HEK293T (cell line): ENCODE measurements at regions of chr2 and their contacts with region 1.

Region 1: DNA sequence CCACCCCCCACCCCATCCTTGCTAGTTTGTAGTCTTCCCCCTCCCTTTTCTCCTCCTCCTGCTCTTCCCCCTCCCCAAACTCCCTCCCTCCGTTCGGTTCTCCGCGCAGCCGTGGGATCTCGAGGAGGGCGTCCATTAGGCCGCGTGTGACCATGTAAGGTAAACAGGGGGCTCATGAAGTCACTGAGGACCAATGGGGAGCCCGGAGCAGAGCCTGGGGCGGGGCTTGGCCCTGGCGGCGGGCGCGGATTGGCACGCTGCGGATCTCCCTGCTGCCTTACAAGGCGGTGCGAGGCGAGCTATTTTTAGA is 246 bp upstream of the KLF7 start:
- DNase-seq: peak; percentile 95

Region 2: DNA sequence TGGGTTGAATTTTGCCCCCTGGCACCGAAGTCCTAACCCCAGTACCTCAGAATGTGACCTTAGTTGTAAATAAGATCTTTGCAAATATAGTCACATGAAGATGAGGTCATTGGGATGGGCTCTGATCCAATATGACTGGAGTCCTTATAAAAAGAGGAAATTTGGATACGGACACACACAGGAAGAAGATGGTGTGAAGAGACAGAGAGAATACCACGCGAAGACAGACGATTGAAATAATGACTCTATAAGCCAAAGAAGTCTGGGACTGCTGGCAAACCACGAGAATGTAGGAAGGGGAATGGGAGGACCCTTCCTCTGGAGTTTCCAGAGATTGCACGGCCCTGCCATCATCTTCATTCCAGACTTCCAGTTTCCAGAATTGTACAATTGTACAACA is 128.1 kb before region 1 on chr2:
- CTCF ChIA-PET with region 1: no interaction called
- POLR2A ChIA-PET with region 1: no interaction called
- DNase-seq: no peak

Region 3: GRCh38 chr2:207133820-207134519 is 32.0 kb before region 1 on chr2:
- CTCF ChIA-PET with region 1: no interaction called
- POLR2A ChIA-PET with region 1: interaction called, 18 read pairs
- DNase-seq: peak; percentile 37

Region 4: DNA sequence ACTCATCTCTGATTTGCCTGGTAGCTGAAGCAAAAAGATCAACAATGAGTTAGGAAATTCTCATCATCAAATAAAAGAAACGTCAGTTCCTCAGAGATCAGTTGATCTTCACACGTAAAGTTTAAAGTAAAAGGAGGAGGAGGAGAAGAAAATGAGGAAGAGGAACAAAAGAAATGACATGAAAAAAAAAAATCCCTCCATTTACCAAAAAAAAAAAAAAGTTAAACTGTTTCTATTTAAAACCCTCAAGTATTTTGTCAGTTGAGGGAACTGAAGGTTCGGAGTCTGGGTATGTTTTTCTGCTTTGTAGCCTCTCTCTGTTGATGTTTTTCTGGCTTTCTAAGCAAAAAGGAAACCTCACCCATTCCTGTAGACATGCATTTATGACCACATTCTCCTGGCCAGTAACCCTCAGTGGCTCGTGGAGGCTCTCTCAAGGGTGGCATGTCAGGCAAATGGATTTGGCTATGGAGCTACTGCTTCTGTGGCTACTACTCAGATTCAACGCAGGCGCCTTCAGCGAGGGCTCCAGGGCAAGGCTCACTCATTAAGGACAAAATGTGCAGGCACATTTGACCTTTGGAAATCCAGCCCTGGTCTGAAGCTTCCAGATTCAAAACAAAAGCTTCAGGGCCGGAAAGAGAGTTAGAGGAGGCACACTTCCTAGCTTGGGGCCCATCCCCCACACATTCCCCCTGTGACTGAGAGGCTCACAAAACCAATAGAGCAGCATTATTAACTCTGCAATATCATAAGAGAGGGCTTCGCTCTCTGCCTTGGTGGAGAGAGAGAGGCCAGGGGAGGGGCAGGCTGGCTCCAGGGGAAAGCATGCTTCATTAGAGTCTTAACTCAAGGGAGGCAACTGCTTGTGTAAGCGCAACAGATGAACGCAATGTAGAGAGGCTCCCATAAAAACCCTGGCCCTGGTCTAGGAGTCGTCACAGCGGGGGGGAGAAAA is 22.5 kb before region 1 on chr2:
- CTCF ChIA-PET with region 1: interaction called, 3 read pairs
- POLR2A ChIA-PET with region 1: interaction called, 14 read pairs
- DNase-seq: peak; percentile 27

Region 5: DNA sequence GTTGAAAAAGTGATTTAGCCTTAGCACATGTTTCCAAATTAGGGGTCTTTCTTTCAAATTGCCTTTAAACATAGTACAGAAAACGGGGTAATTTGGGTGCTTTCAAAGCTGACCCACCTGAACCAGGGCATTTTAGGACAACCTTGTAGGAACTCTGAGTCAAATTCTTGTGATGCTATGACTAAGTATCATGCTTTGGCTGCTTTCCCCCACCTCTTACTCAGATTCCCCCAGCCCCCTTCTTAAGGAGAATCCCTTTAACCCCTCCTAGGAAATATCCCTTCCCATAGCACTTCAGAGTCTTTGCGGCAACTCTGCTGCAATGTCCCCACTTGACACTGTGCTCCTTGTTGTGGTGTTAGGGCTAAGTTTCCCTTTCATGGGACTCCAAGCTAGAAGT is 18.4 kb after region 1 on chr2:
- CTCF ChIA-PET with region 1: no interaction called
- POLR2A ChIA-PET with region 1: interaction called, 12 read pairs
- DNase-seq: no peak

Region 6: GRCh38 chr2:207337234-207338219 is 171.5 kb after region 1 on chr2:
- CTCF ChIA-PET with region 1: no interaction called
- POLR2A ChIA-PET with region 1: interaction called, 10 read pairs
- DNase-seq: peak; percentile 58